Lower leg skin (tissue), 4 donors: ENCODE measurements at regions of chr10 and their contacts with region 1.

Region 1: GRCh38 chr10:11715815-11716494 is 26.2 kb upstream of the ECHDC3 start:
- DNase-seq: peak in 1 of 2 donors; percentile 28
- H3K4me3 ChIP-seq: no peak overlapping the region
- CTCF ChIP-seq: peak in 1 of 3 donors; percentile 69
- POLR2A ChIP-seq: no peak

Region 2: GRCh38 chr10:11698691-11699549 is 17.0 kb before region 1 on chr10:
- intact Hi-C with region 1: no loop called
- DNase-seq: no peak
- H3K4me3 ChIP-seq: no peak overlapping the region
- CTCF ChIP-seq: no peak
- POLR2A ChIP-seq: no peak

Region 3: GRCh38 chr10:12484941-12485805 is 769.2 kb after region 1 on chr10:
- intact Hi-C with region 1: no loop called
- DNase-seq: no peak
- H3K4me3 ChIP-seq: no peak overlapping the region
- CTCF ChIP-seq: no peak
- POLR2A ChIP-seq: no peak

Region 4: DNA sequence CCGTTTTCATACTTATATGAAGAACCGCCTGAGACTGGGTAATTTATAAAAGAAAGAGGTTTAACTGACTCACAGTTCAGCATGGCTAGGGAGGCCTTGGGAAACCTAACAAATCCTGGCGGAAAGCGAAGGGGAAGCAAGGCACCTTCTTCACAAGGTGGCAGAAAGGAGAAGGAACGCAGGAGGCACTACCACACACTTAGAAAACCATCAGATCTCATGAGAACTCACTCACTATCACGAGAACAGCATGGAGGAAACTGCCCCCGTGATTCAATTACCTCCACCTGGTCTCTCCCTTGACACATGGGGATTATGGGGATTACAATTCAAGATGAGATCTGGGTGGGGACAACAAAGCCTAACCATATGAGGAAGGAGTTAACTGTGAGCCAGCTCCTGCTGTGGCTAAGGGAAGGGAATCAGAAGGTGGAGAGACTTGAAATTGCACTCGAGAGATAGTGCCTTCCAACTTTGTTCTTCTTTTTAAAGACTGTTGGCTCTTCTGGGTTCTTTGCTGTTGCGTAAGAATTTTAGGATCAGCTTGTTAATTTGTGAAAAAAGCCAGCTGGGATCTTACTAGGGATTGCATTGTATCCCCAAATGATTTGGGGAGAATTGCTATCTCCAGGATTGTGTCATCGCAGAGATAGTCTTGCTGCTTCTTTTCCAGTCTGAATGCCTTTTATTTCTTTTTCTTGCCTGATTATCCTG is 1405.0 kb after region 1 on chr10:
- intact Hi-C with region 1: loop called (anchors 5 kb)
- DNase-seq: no peak
- H3K4me3 ChIP-seq: no peak overlapping the region
- CTCF ChIP-seq: no peak
- POLR2A ChIP-seq: no peak